SK-N-SH (cell line): ENCODE measurements at regions of chr2 and their contacts with region 1.

Region 1: GRCh38 chr2:102753563-102754159 is 8.2 kb upstream of the TMEM182 start:
- DNase-seq: peak; percentile 18
- H3K4me3 ChIP-seq: no peak overlapping the region; a peak in 1 of 4 replicates
- H3K27ac ChIP-seq: no peak overlapping the region
- H3K4me1 ChIP-seq: no peaks in the 10 kb centered on the region
- H3K27me3 ChIP-seq: no peaks in the 10 kb centered on the region
- CTCF ChIP-seq: peak; percentile 92
- EP300 ChIP-seq: no peak
- RAD21 ChIP-seq: peak; percentile 53

Region 2: GRCh38 chr2:102736410-102737409 is 17.0 kb before region 1 on chr2:
- CTCF ChIA-PET with region 1: interaction called, 43 read pairs
- POLR2A ChIA-PET with region 1: no interaction called
- DNase-seq: peak; percentile 94
- H3K4me3 ChIP-seq: peak overlapping the region; percentile 75 to 98
- H3K27ac ChIP-seq: peak overlapping the region in 1 of 2 experiments; percentile 75; a peak in 1 of 4 replicates
- H3K4me1 ChIP-seq: peaks cover 0 to 15% of the 10 kb centered on the region in 2 experiments; a peak in 2 of 4 replicates
- H3K27me3 ChIP-seq: no peaks in the 10 kb centered on the region
- CTCF ChIP-seq: no peak
- EP300 ChIP-seq: no peak
- RAD21 ChIP-seq: no peak

Region 3: DNA sequence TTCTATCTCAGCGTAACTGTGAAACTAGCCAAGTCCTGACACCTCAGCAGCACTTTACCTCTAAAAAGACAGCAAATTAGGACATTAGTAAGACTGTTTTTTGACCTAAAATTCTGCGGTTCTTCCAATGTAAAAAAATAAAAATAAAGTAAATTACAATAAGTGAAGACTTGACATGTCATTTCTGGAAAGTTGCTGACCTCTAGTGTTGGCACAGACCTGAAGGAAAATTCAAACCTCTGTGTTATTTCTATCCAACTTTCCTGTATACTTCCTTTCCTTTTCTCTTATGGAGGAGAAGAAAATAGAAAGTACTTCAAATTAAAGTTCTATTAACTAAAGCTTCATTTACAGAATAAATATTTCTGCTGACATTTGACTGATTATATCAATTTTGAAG is 118.7 kb after region 1 on chr2:
- CTCF ChIA-PET with region 1: interaction called, 10 read pairs
- POLR2A ChIA-PET with region 1: no interaction called
- DNase-seq: peak; percentile 19
- H3K4me3 ChIP-seq: no peak overlapping the region
- H3K27ac ChIP-seq: no peak overlapping the region
- H3K4me1 ChIP-seq: no peaks in the 10 kb centered on the region
- H3K27me3 ChIP-seq: no peaks in the 10 kb centered on the region
- CTCF ChIP-seq: peak; percentile 47
- EP300 ChIP-seq: no peak
- RAD21 ChIP-seq: peak; percentile 76